ENCODE measurements at regions of chr2 and their contacts with region 1.

Region 1: DNA sequence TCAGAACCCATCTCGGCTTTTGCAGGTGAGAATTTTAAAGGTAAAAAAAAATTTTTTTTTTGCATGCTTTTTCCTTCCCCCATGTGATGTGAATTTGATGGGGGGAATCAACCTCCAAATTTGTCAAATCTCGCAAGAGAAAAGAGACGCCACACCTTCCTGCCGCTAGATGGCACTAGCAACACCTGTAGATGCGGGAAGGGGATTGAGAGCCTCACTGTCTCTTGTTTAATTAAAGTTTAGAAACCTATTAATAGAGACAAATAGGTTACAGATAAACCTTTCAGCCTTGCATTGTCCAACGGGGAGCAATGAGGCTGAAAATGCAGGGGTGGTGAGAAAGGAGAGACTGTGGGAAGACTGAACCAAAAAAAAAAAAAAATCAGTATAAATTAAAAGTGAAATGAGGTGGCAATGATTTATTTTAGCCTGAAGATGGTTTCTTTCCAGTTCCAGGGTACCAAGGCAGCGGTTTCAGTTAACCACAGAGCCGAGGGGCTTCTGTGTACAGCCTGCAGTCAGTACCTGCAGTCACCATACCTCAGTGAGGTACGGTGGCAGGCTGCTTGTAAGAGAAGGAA is 84.6 kb downstream of the NRP2 start:
- DNase-seq: peak; percentile 76
- ATAC-seq: peak; percentile 40
- H3K4me3 Mint-ChIP-seq: no peak overlapping the region
- H3K27ac Mint-ChIP-seq: no peak overlapping the region
- H3K4me1 Mint-ChIP-seq: peaks cover 13% of the 10 kb centered on the region
- H3K27me3 Mint-ChIP-seq: peaks cover 20% of the 10 kb centered on the region

Region 2: DNA sequence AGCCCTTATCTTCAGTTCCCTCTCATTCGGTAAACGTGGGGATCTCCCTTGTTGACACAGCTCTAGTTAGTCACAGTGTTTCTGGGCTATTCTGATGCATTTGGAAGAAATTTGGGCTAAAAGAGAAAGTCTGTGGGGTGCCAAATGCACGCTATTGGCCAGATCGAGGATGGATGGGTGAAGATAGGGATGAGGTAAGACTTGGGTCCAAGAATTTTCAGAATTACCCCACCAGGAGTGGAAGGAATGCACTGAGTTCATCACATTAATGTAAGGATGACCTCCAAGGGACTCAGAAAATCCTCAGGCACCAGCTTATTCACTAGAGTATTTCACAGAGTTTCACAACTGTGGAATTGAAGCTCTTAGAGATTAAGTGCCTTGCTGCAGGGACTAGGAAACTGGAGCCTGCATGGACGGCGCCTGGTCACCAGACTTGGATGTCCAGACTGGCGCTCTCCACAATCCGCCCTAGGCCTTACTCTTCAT is 35.2 kb before region 1 on chr2:
- CTCF ChIA-PET with region 1: no interaction called
- POLR2A ChIA-PET with region 1: no interaction called
- intact Hi-C with region 1: no loop called
- DNase-seq: no peak
- ATAC-seq: no peak
- H3K4me3 Mint-ChIP-seq: no peak overlapping the region
- H3K27ac Mint-ChIP-seq: no peak overlapping the region
- H3K4me1 Mint-ChIP-seq: no peaks in the 10 kb centered on the region
- H3K27me3 Mint-ChIP-seq: no peaks in the 10 kb centered on the region

Region 3: DNA sequence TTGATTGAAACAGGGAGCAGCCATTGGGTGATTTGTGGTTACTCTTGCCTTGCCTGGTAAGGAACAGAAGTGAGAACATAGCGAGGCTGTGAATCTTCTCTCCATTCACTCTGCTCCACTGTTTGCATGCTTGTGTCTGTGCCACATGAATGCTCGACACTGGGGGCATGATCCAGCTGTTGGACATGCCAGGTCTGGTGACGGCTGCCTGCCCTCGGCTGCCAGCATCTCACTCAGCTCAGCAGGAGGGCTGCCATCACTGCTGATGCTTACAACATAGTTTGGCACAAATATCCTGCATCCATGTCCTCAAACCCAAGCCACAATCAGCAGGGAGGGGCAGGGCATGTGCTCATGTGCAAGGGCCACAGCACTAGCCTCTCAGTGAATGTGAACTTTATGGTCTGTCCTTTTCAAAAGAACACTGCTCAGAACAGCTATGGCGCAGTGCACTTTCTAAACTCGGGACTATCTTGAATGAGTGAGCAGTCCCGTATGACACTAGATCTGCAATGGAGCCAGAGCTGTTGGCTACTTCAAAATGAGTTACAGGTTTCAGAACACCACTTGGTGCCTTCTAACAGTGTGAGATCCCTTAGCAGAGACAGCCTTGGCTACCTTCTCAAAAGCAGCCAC is 41.7 kb after region 1 on chr2:
- CTCF ChIA-PET with region 1: interaction called, 3 read pairs
- POLR2A ChIA-PET with region 1: no interaction called
- intact Hi-C with region 1: loop called (anchors 1 kb)
- DNase-seq: no peak
- ATAC-seq: no peak
- H3K4me3 Mint-ChIP-seq: no peak overlapping the region
- H3K27ac Mint-ChIP-seq: no peak overlapping the region
- H3K4me1 Mint-ChIP-seq: no peaks in the 10 kb centered on the region
- H3K27me3 Mint-ChIP-seq: peaks cover 2% of the 10 kb centered on the region

Region 4: DNA sequence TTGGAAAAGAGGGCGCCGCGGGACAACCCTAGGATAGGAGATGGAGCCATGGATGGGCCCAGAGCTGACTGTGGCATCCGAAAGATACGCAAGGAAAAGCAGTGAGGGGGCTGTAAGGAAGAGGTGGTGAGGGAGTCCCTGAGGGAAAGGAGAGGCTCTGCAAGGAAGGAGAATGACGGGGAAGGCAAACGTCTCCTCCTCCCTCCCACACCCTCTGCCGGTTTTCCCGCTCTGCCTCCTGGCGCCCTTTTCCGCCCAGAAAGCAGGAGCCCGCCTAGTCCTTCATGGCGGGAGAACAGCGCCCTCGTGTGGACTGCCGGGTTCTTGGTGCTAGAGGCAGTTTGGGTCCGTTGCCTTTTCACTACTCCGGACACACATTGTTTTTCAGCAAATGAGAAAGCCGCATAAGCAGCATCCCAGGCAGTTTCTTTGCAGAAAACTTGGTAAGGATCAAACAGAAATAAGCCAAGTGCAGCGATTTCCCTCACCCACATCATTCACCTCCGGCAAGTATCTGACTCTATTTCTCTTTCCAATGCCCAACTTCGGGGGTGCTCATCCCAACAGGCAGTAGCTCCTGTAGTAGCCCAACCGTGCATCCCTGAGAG is 118.7 kb after region 1 on chr2:
- CTCF ChIA-PET with region 1: interaction called, 4 read pairs
- POLR2A ChIA-PET with region 1: no interaction called
- intact Hi-C with region 1: loop called (anchors 1 to 2 kb)
- DNase-seq: peak; percentile 86
- ATAC-seq: peak; percentile 69
- H3K4me3 Mint-ChIP-seq: no peak overlapping the region
- H3K27ac Mint-ChIP-seq: no peak overlapping the region
- H3K4me1 Mint-ChIP-seq: no peaks in the 10 kb centered on the region
- H3K27me3 Mint-ChIP-seq: peaks cover 16% of the 10 kb centered on the region

Region 5: GRCh38 chr2:205925373-205926337 is 158.8 kb after region 1 on chr2:
- CTCF ChIA-PET with region 1: interaction called, 5 read pairs
- POLR2A ChIA-PET with region 1: no interaction called
- intact Hi-C with region 1: loop called (anchors 1 to 2 kb)
- DNase-seq: peak; percentile 88
- ATAC-seq: peak; percentile 98
- H3K4me3 Mint-ChIP-seq: no peak overlapping the region
- H3K27ac Mint-ChIP-seq: no peak overlapping the region
- H3K4me1 Mint-ChIP-seq: peaks cover 7% of the 10 kb centered on the region
- H3K27me3 Mint-ChIP-seq: peaks cover 45% of the 10 kb centered on the region

Region 6: GRCh38 chr2:205947621-205948495 is 181.0 kb after region 1 on chr2:
- CTCF ChIA-PET with region 1: no interaction called
- POLR2A ChIA-PET with region 1: no interaction called
- intact Hi-C with region 1: loop called in 1 of 2 experiments (anchors 5 kb)
- DNase-seq: peak; percentile 76
- ATAC-seq: peak; percentile 77
- H3K4me3 Mint-ChIP-seq: no peak overlapping the region
- H3K27ac Mint-ChIP-seq: no peak overlapping the region
- H3K4me1 Mint-ChIP-seq: peaks cover 2% of the 10 kb centered on the region
- H3K27me3 Mint-ChIP-seq: peaks cover 10% of the 10 kb centered on the region

Measured in activated CD4-positive, alpha-beta T cell treated with anti-CD3 and anti-CD28 coated beads for 36 hours (primary cell).